ENCODE measurements at regions of chr5 and their contacts with region 1.

Region 1: DNA sequence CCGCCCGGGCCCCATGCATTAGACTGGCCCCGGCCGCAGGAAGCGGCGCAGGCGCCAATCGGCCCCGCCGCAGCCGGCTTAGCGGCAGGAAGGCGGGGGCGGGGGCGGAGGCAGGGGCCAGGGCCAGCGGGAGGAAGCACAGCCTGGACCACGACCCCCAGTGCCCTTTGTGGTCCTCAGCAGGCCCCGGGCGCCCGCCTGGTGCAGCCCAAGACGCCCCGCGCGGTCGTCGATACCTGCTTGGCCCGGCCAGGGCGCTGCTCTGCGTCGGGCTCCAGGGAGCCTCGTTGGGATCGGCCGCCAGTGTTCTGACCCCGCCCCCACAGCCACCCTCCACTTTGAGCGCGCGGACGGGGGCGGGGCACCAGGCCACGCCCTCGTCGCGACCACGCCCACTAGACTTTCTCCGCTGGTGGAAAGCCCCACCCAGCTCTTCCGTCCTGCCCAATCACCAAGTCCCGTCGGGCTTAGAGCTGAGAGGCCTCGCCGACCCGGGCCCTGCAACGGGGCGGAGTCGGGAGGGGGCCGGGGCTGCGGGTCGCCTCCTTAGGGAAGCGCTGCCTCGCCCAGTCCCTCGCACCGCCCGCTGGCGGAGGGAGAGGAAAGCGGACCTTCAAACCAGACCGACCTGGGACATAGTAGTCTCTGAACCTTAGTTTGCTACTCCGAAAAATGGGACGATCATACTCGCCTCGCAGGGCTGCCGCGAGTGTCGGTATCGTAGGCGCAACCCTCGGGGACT is at the start of gene PDLIM7:
- DNase-seq: peak; percentile 94
- H3K4me3 ChIP-seq: peak within 1 kb of the TSS; percentile 81
- H3K27ac ChIP-seq: peak within 1 kb of the TSS; percentile 93
- H3K4me1 ChIP-seq: peaks cover 36% of the 10 kb centered on the region
- H3K27me3 ChIP-seq: no peaks in the 10 kb centered on the region
- CTCF ChIP-seq: no peak
- total RNA-seq, gene PDLIM7: 116 and 132 TPM in 2 replicates

Region 2: GRCh38 chr5:177311723-177312648 is 185.5 kb before region 1 on chr5 and contains the start of gene MXD3:
- CTCF ChIA-PET with region 1: no interaction called
- POLR2A ChIA-PET with region 1: no interaction called
- intact Hi-C with region 1: loop called (anchors 2 kb)
- DNase-seq: peak; percentile 98
- H3K4me3 ChIP-seq: peak within 1 kb of the TSS; percentile 80
- H3K27ac ChIP-seq: peak within 1 kb of the TSS; percentile 97
- H3K4me1 ChIP-seq: peaks cover 20% of the 10 kb centered on the region
- H3K27me3 ChIP-seq: no peaks in the 10 kb centered on the region
- CTCF ChIP-seq: no peak
- total RNA-seq, gene MXD3: 15.1 and 19.4 TPM in 2 replicates

Region 3: GRCh38 chr5:177390363-177391300 is 106.8 kb before region 1 on chr5:
- CTCF ChIA-PET with region 1: interaction called, 4 read pairs
- POLR2A ChIA-PET with region 1: no interaction called
- intact Hi-C with region 1: loop called (anchors 1 kb)
- DNase-seq: peak; percentile 86
- H3K4me3 ChIP-seq: no peak overlapping the region
- H3K27ac ChIP-seq: no peak overlapping the region
- H3K4me1 ChIP-seq: peaks cover 4% of the 10 kb centered on the region
- H3K27me3 ChIP-seq: no peaks in the 10 kb centered on the region
- CTCF ChIP-seq: peak; percentile 85

Region 4: GRCh38 chr5:177546258-177546741 is 48.8 kb after region 1 on chr5:
- CTCF ChIA-PET with region 1: no interaction called
- POLR2A ChIA-PET with region 1: interaction called, 11 read pairs
- intact Hi-C with region 1: no loop called
- DNase-seq: peak; percentile 79
- H3K4me3 ChIP-seq: no peak overlapping the region
- H3K27ac ChIP-seq: peak overlapping the region; percentile 75
- H3K4me1 ChIP-seq: peaks cover 20% of the 10 kb centered on the region
- H3K27me3 ChIP-seq: no peaks in the 10 kb centered on the region
- CTCF ChIP-seq: no peak

Measured in A673 (cell line).